ENCODE measurements at regions of chr6 and their contacts with region 1.

Region 1: DNA sequence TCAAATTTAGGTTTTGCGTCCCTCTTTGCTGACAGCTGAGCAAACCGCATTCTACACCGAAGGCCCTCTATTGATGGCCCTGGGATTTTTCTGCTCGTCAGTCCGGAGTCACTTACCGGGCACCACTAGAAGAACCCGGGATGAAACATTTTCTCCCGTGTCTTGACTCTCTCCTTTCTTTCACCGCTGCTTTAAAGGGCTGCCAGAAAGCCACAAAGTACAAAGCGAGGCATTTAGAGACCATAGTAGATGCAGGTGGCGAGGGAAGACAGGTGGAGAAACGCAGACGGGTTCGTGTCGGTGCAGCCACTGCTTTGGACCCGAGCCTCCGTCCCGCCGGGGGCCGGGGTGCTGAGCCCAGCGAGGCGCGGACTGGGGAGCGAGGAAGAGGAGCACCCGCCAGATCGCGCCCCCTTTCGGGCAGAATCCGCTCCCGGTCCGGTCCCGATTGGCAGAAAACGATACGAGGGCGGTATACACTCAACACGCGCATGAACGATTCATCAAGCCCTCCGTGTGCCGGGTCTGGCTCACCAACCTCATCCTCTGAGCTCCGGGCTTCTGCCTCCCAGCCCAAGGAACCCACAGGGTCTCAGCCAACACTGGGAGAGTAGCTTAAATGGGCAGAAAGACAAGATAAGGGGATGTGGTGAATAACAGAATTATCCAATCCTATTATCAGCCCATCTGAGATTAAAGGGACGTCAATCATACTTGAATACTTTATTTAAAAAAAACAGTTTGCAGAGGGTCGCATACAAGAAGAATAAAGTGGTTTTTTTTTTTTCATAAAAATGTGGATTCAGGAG is 84.9 kb downstream of the TRIM27 start:
- DNase-seq: peak; percentile 50 to 88 (median 72)
- ATAC-seq: peak; percentile 75 to 82 (median 78)
- H3K4me3 ChIP-seq: peak overlapping the region; percentile 82 to 94
- H3K4me3 Mint-ChIP-seq: peak overlapping the region; percentile 92 to 94 (median 94)
- H3K27ac ChIP-seq: peak overlapping the region; percentile 60
- H3K27ac Mint-ChIP-seq: peak overlapping the region; percentile 87 to 89
- H3K4me1 ChIP-seq: peaks cover 12 to 17% of the 10 kb centered on the region in 2 experiments
- H3K4me1 Mint-ChIP-seq: peaks cover 14 to 29% (median 22%) of the 10 kb centered on the region in 3 donors
- H3K27me3 ChIP-seq: peaks cover 2 to 13% of the 10 kb centered on the region in 2 experiments
- H3K27me3 Mint-ChIP-seq: peaks cover 19 to 32% of the 10 kb centered on the region in 2 donors

Region 2: GRCh38 chr6:28695715-28696114 is 143.1 kb before region 1 on chr6:
- CTCF ChIA-PET with region 1: no interaction called
- POLR2A ChIA-PET with region 1: no interaction called
- DNase-seq: no peak
- ATAC-seq: no peak
- H3K4me3 ChIP-seq: no peak overlapping the region
- H3K4me3 Mint-ChIP-seq: peak overlapping the region in 1 of 3 donors; percentile 22
- H3K27ac ChIP-seq: no peak overlapping the region
- H3K27ac Mint-ChIP-seq: no peak overlapping the region
- H3K4me1 ChIP-seq: peaks cover 0 to 6% of the 10 kb centered on the region in 2 experiments
- H3K4me1 Mint-ChIP-seq: peaks cover 7 to 32% (median 10%) of the 10 kb centered on the region in 3 donors
- H3K27me3 ChIP-seq: peaks cover 24 to 54% of the 10 kb centered on the region in 2 experiments
- H3K27me3 Mint-ChIP-seq: peaks cover 90 to 97% of the 10 kb centered on the region in 2 donors

Region 3: DNA sequence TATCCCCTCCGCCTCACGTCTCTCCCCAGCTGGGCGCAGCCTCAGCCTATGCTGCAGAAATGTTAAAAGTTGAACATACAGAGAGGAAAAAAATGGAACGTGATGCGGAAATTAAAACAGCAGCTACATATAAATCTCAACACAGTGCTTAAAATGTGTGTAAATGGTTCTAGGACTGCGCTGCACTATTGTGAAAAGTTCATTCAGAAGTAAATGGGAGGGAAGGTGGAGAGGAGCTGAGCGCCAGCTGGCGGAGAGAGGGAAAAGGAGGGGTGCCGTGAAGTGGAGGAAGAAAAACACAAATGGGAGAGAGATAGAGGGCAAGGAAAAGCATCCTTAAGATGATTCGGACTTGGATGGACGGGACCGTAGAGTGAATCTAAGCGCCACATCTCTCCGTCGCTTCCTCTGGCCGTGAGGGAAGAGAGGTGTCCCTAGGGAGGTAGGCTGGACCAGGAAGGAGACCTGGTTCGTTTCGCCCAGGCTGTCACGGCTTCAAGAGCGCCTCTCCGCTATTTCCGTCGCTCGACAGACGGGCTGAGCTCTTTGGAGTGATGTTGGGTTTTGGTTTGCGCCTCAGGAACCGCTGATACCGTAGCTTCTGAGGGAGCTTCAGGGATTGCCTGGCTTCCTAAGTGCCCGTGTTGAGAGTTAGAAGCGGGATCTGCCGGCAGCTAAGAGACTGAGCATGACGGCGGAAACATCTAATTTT is 28.7 kb before region 1 on chr6:
- CTCF ChIA-PET with region 1: no interaction called
- POLR2A ChIA-PET with region 1: no interaction called
- DNase-seq: peak in 1 of 35 experiments; percentile 22
- ATAC-seq: no peak
- H3K4me3 ChIP-seq: peak overlapping the region in 1 of 2 donors; percentile 38
- H3K4me3 Mint-ChIP-seq: no peak overlapping the region
- H3K27ac ChIP-seq: no peak overlapping the region
- H3K27ac Mint-ChIP-seq: peak overlapping the region in 1 of 2 donors; percentile 37
- H3K4me1 ChIP-seq: peaks cover 0 to 13% of the 10 kb centered on the region in 2 experiments
- H3K4me1 Mint-ChIP-seq: peaks cover 10 to 22% (median 11%) of the 10 kb centered on the region in 3 donors
- H3K27me3 ChIP-seq: peaks cover 48 to 69% of the 10 kb centered on the region in 2 experiments
- H3K27me3 Mint-ChIP-seq: peaks cover 88 to 91% of the 10 kb centered on the region in 2 donors

Region 4: GRCh38 chr6:28824793-28825731 is 13.8 kb before region 1 on chr6:
- CTCF ChIA-PET with region 1: interaction called in 1 of 2 experiments, 11 read pairs
- POLR2A ChIA-PET with region 1: no interaction called
- DNase-seq: no peak
- ATAC-seq: no peak
- H3K4me3 ChIP-seq: no peak overlapping the region
- H3K4me3 Mint-ChIP-seq: peak overlapping the region in 1 of 3 donors; percentile 23
- H3K27ac ChIP-seq: no peak overlapping the region
- H3K27ac Mint-ChIP-seq: no peak overlapping the region
- H3K4me1 ChIP-seq: peaks cover 0 to 10% of the 10 kb centered on the region in 2 experiments
- H3K4me1 Mint-ChIP-seq: peaks cover 8 to 13% (median 11%) of the 10 kb centered on the region in 3 donors
- H3K27me3 ChIP-seq: peaks cover 28 to 54% of the 10 kb centered on the region in 2 experiments
- H3K27me3 Mint-ChIP-seq: peaks cover 78 to 80% of the 10 kb centered on the region in 2 donors

Region 5: GRCh38 chr6:28884423-28885131 is 45.7 kb after region 1 on chr6:
- CTCF ChIA-PET with region 1: interaction called in 1 of 2 experiments, 12 read pairs
- POLR2A ChIA-PET with region 1: interaction called, 3 to 4 read pairs
- DNase-seq: peak; percentile 61 to 92 (median 82)
- ATAC-seq: peak; percentile 86 to 88 (median 87)
- H3K4me3 ChIP-seq: peak overlapping the region; percentile 32 to 41
- H3K4me3 Mint-ChIP-seq: peak overlapping the region; percentile 54 to 80 (median 68)
- H3K27ac ChIP-seq: peak overlapping the region; percentile 66
- H3K27ac Mint-ChIP-seq: peak overlapping the region; percentile 87 to 88
- H3K4me1 ChIP-seq: peaks cover 8 to 33% of the 10 kb centered on the region in 2 experiments
- H3K4me1 Mint-ChIP-seq: peaks cover 30 to 44% (median 43%) of the 10 kb centered on the region in 3 donors
- H3K27me3 ChIP-seq: peaks cover 0 to 5% of the 10 kb centered on the region in 2 experiments
- H3K27me3 Mint-ChIP-seq: peaks cover 0 to 6% of the 10 kb centered on the region in 2 donors

Region 6: DNA sequence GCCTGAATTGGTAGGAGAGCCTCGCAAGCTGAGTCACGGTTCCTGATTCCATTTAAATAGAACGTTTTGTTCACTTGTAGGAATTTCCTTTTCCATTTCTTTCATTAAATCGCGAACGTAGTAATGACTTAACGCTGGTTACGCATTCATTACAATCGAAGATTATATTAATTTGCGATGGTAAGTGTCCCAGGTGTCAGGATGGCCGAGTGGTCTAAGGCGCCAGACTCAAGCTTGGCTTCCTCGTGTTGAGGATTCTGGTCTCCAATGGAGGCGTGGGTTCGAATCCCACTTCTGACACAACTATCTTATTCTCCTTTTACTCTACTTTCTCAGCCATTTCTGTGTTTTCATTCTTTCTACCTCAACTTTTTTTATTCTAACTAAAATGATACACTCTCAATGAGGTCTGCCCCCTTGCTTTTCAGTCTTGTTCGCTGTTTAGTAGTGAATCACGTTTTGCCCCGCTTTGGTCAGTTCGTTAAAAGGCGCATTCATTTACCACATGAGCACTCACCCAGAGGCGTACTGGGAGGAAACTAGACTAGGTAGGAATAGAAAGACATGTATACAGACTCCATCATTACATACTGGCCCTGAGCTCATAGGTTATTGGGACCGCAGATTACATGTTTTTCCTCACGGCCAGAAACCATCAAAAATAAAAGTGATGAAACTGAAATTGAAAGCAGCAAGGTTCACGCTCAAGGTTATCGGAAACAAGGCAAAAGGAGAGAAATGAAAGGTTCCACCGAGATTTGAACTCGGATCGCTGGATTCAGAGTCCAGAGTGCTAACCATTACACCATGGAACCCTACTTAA is 102.2 kb after region 1 on chr6:
- CTCF ChIA-PET with region 1: interaction called, 4 to 21 read pairs
- POLR2A ChIA-PET with region 1: no interaction called
- DNase-seq: peak; percentile 52 to 86 (median 73)
- ATAC-seq: peak; percentile 71 to 72 (median 71)
- H3K4me3 ChIP-seq: peak overlapping the region; percentile 63 to 72
- H3K4me3 Mint-ChIP-seq: peak overlapping the region; percentile 83 to 88 (median 85)
- H3K27ac ChIP-seq: peak overlapping the region; percentile 71
- H3K27ac Mint-ChIP-seq: peak overlapping the region; percentile 87 to 89
- H3K4me1 ChIP-seq: peaks cover 24 to 33% of the 10 kb centered on the region in 2 experiments
- H3K4me1 Mint-ChIP-seq: peaks cover 53 to 56% (median 55%) of the 10 kb centered on the region in 3 donors
- H3K27me3 ChIP-seq: no peaks in the 10 kb centered on the region
- H3K27me3 Mint-ChIP-seq: peaks cover 0 to 2% of the 10 kb centered on the region in 2 donors

Region 7: GRCh38 chr6:29016559-29017427 is 178.0 kb after region 1 on chr6:
- CTCF ChIA-PET with region 1: interaction called, 3 to 72 read pairs
- POLR2A ChIA-PET with region 1: no interaction called
- DNase-seq: peak; percentile 41 to 91 (median 74)
- ATAC-seq: peak; percentile 76 to 90 (median 86)
- H3K4me3 ChIP-seq: peak overlapping the region; percentile 51 to 63
- H3K4me3 Mint-ChIP-seq: peak overlapping the region; percentile 83 to 93 (median 92)
- H3K27ac ChIP-seq: no peak overlapping the region
- H3K27ac Mint-ChIP-seq: peak overlapping the region; percentile 60 to 77
- H3K4me1 ChIP-seq: peaks cover 5 to 16% of the 10 kb centered on the region in 2 experiments
- H3K4me1 Mint-ChIP-seq: peaks cover 16 to 24% (median 20%) of the 10 kb centered on the region in 3 donors
- H3K27me3 ChIP-seq: peaks cover 12% of the 10 kb centered on the region in 2 experiments
- H3K27me3 Mint-ChIP-seq: peaks cover 11 to 26% of the 10 kb centered on the region in 2 donors

Measured in T-cell (primary cell).